ENCODE measurements at regions of chr4 and their contacts with region 1.

Region 1: GRCh38 chr4:175716961-175717360 is 95.1 kb downstream of the GPM6A start:
- DNase-seq: no peak
- ATAC-seq: no peak
- H3K4me3 ChIP-seq: no peak overlapping the region
- H3K27ac ChIP-seq: no peak overlapping the region
- H3K4me1 ChIP-seq: no peaks in the 10 kb centered on the region
- H3K27me3 ChIP-seq: no peaks in the 10 kb centered on the region
- CTCF ChIP-seq: no peak

Region 2: DNA sequence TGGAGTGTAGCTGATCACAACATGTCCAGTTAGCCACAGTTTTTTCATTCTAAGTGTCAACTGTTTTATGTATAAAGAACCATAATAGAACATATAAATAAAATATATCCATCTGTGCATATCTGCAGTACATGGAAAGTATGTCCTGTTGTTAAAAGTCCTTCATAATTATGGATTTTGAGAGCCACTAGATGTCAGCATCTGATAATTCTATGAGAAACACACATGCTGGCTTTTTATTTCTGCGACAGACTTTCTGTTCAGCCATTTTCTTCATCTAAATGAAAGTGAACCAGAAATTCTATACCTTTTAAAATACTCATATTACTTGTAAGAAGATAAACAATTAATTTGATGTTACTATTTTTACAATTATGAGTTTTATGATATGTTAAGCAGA is 156.4 kb before region 1 on chr4:
- CTCF ChIA-PET with region 1: no interaction called
- POLR2A ChIA-PET with region 1: no interaction called
- intact Hi-C with region 1: loop called (anchors 5 kb)
- DNase-seq: peak; percentile 68
- ATAC-seq: peak; percentile 68
- H3K4me3 ChIP-seq: no peak overlapping the region
- H3K27ac ChIP-seq: no peak overlapping the region
- H3K4me1 ChIP-seq: 0 out of 2 replicates have a peak, but pooled peaks cover 5% of the 10 kb centered on the region
- H3K27me3 ChIP-seq: no peaks in the 10 kb centered on the region
- CTCF ChIP-seq: peak; percentile 67

Region 3: DNA sequence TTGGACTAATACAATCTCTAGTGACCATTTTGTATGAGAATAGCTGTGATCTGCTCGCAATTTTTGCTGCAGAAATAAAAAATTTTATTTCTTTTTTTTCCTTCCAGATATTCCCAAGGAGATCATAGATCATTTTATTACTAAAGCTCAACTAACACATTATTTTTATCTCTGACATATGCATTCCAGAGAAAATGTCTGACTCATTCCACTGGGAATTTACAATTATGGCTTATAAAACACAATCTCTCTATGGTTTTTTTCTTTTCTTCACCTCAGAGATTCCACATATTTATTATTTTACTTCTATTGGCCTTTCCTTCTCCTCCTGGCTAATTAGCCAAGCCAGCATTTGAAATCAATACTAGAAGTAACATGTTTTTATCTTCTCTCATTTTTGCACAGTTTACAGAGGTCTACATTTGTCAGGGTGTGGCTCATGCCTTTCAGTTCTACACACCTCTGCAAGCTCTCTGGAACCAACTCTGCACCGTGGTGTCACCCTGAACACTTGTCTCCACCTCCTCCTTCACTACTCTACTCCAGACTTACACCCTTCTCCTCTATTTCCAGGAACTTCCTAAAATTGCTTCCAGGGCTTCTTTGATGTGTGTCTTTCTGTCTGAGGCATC is 154.9 kb after region 1 on chr4:
- CTCF ChIA-PET with region 1: no interaction called
- POLR2A ChIA-PET with region 1: no interaction called
- intact Hi-C with region 1: loop called (anchors 5 kb)
- DNase-seq: peak; percentile 58
- ATAC-seq: peak; percentile 72
- H3K4me3 ChIP-seq: 0 out of 2 replicates have a peak overlapping the region, but pooled peaks have one; percentile 7
- H3K27ac ChIP-seq: peak overlapping the region; percentile 31
- H3K4me1 ChIP-seq: peaks cover 24% of the 10 kb centered on the region
- H3K27me3 ChIP-seq: no peaks in the 10 kb centered on the region
- CTCF ChIP-seq: no peak

Measured in PC-3 (cell line).